ENCODE measurements at regions of chr14 and their contacts with region 1.

Region 1: GRCh38 chr14:39169541-39169900 is 612 bp downstream of the TRAPPC6B start:
- DNase-seq: peak in 1 of 2 donors; percentile 49
- H3K4me3 ChIP-seq: peak overlapping the region; percentile 70 to 92 (median 77)
- H3K27ac ChIP-seq: peak overlapping the region; percentile 97 to 99 (median 99)
- H3K4me1 ChIP-seq: peaks cover 20 to 58% (median 46%) of the 10 kb centered on the region in 4 donors
- H3K27me3 ChIP-seq: no peaks in the 10 kb centered on the region
- CTCF ChIP-seq: no peak
- EP300 ChIP-seq: no peak
- POLR2A ChIP-seq: no peak

Region 2: GRCh38 chr14:38384741-38385140 is 784.8 kb before region 1 on chr14:
- intact Hi-C with region 1: no loop called
- DNase-seq: no peak
- H3K4me3 ChIP-seq: no peak overlapping the region
- H3K27ac ChIP-seq: no peak overlapping the region
- H3K4me1 ChIP-seq: no peaks in the 10 kb centered on the region
- H3K27me3 ChIP-seq: no peaks in the 10 kb centered on the region
- CTCF ChIP-seq: no peak
- EP300 ChIP-seq: no peak
- POLR2A ChIP-seq: no peak

Region 3: GRCh38 chr14:39102969-39103957 is 66.3 kb before region 1 on chr14 and contains the start of gene SEC23A:
- intact Hi-C with region 1: loop called (anchors 10 kb)
- DNase-seq: peak; percentile 92 to 97
- H3K4me3 ChIP-seq: peak within 1 kb of the TSS; percentile 73 to 96 (median 90)
- H3K27ac ChIP-seq: peak within 1 kb of the TSS; percentile 97 to 100 (median 99)
- H3K4me1 ChIP-seq: peaks cover 14 to 60% (median 38%) of the 10 kb centered on the region in 4 donors
- H3K27me3 ChIP-seq: no peaks in the 10 kb centered on the region
- CTCF ChIP-seq: no peak
- EP300 ChIP-seq: no peak
- POLR2A ChIP-seq: peak in 2 of 4 donors; percentile 62 to 85
- total RNA-seq, gene SEC23A: 54.6 to 584 (median 171) TPM

Region 4: GRCh38 chr14:39322807-39323206 is 153.3 kb after region 1 on chr14:
- intact Hi-C with region 1: no loop called
- DNase-seq: no peak
- H3K4me3 ChIP-seq: no peak overlapping the region
- H3K27ac ChIP-seq: no peak overlapping the region
- H3K4me1 ChIP-seq: no peaks in the 10 kb centered on the region
- H3K27me3 ChIP-seq: no peaks in the 10 kb centered on the region
- CTCF ChIP-seq: no peak
- EP300 ChIP-seq: no peak
- POLR2A ChIP-seq: no peak

Region 5: GRCh38 chr14:39432179-39432618 is 262.7 kb after region 1 on chr14 and contains the start of gene FBXO33:
- intact Hi-C with region 1: no loop called
- DNase-seq: peak; percentile 97 to 99
- H3K4me3 ChIP-seq: peak within 1 kb of the TSS; percentile 89 to 95 (median 94)
- H3K27ac ChIP-seq: peak within 1 kb of the TSS; percentile 93 to 99 (median 98)
- H3K4me1 ChIP-seq: peaks cover 17 to 50% (median 37%) of the 10 kb centered on the region in 4 donors
- H3K27me3 ChIP-seq: no peaks in the 10 kb centered on the region
- CTCF ChIP-seq: no peak
- EP300 ChIP-seq: no peak
- POLR2A ChIP-seq: peak in 2 of 4 donors; percentile 42 to 45
- total RNA-seq, gene FBXO33: 4.7 to 30.1 (median 10.4) TPM

Region 6: GRCh38 chr14:39673270-39673711 is 503.8 kb after region 1 on chr14:
- intact Hi-C with region 1: no loop called
- DNase-seq: peak in 1 of 2 donors; percentile 16
- H3K4me3 ChIP-seq: no peak overlapping the region
- H3K27ac ChIP-seq: no peak overlapping the region
- H3K4me1 ChIP-seq: no peaks in the 10 kb centered on the region
- H3K27me3 ChIP-seq: no peaks in the 10 kb centered on the region
- CTCF ChIP-seq: no peak
- EP300 ChIP-seq: no peak
- POLR2A ChIP-seq: no peak